Gastrocnemius medialis (tissue), 4 donors: ENCODE measurements at regions of chr11 and their contacts with region 1.

Region 1: DNA sequence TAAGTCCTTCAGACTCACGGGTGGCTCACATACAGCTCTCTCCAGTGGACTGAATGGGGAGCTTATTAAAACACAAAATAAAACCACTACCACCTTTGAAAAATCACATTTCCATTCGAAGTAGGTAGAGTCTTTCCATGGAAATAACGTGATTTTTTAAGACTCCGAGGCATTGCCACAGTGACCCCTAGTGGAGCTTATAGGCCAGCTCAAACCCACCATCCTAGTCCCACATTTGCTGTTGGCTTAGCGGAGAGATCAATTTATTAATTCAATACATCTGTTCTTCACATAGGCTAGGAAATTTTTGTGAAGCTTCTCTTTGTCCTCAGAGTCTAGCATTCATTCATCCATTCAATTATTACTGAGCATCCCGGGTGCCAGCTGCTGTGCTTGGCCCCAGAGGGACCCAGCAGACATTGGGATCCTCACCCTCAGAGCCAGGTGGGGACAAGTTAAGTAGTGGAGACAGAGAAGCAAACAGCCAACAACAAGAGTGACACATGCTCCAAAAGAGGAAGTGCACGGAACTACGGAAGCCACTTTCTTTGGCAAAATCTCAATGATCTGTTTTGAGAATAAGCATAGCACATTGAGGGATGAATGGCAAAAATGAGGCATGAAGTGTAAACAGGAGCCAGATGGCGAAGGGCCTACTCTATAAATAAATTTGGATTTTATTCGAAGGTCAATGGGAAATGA is 10.2 kb upstream of the P4HA3 start:
- DNase-seq: no peak
- ATAC-seq: no peak
- H3K4me3 ChIP-seq: no peak overlapping the region
- H3K27ac ChIP-seq: peak overlapping the region in 3 of 4 donors; percentile 68 to 79 (median 78)
- H3K4me1 ChIP-seq: peaks cover 31 to 49% of the 10 kb centered on the region in 2 donors
- H3K27me3 ChIP-seq: no peaks in the 10 kb centered on the region
- CTCF ChIP-seq: peak in 4 of 5 experiments; percentile 18 to 57 (median 44)
- POLR2A ChIP-seq: no peak

Region 2: DNA sequence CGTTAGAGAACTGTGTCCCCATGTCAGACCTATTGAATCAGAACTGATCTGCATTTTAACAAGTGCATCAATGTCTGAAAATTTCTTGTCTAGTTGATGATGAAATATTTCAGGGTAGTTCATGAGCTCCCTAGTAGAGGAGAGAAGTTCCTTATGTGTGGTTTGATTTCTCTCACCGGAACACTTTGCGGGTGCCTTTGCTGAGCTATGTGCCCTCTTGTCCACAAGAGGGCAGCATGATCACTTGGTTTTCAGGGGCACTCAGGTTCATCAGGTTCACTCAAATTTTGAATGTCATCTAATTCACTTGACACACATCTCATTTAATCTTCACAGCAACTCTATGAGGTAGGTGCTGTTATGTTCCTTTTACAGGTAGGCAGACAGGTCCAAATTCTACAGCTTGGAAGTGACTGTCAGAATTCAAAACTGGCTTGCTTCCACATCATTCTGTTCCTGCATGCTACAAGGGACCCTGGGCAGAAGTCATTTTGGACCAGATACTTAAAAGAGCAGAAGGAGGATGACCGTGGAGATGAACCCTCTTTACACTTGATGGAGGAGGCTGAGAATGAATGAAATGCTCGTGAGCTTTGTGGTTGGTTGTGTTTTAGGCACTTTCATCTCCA is 65.8 kb before region 1 on chr11:
- in situ Hi-C with region 1: no loop called
- intact Hi-C with region 1: loop called (anchors 2 kb)
- DNase-seq: peak in 1 of 2 donors; percentile 36
- ATAC-seq: peak; percentile 72 to 74
- H3K4me3 ChIP-seq: no peak overlapping the region
- H3K27ac ChIP-seq: no peak overlapping the region
- H3K4me1 ChIP-seq: peaks cover 17 to 29% of the 10 kb centered on the region in 2 donors
- H3K27me3 ChIP-seq: no peaks in the 10 kb centered on the region
- CTCF ChIP-seq: peak; percentile 71 to 90 (median 86)
- POLR2A ChIP-seq: no peak

Region 3: GRCh38 chr11:74311352-74311926 is 10.2 kb before region 1 on chr11 and contains the start of gene P4HA3:
- in situ Hi-C with region 1: no loop called
- intact Hi-C with region 1: loop called (anchors 1 kb)
- DNase-seq: peak; percentile 27 to 45
- ATAC-seq: peak; percentile 80 to 92
- H3K4me3 ChIP-seq: peak within 1 kb of the TSS; percentile 39 to 73 (median 54)
- H3K27ac ChIP-seq: no peak within 1 kb of the TSS
- H3K4me1 ChIP-seq: no peaks in the 10 kb centered on the region
- H3K27me3 ChIP-seq: no peaks in the 10 kb centered on the region
- CTCF ChIP-seq: peak in 1 of 5 experiments; percentile 27
- POLR2A ChIP-seq: no peak
- total RNA-seq, gene P4HA3: 0.09 TPM in 1 of 4 donors, not detected in the others

Region 4: GRCh38 chr11:74443071-74443864 is 121.6 kb after region 1 on chr11:
- in situ Hi-C with region 1: no loop called
- intact Hi-C with region 1: loop called (anchors 5 kb)
- DNase-seq: peak in 1 of 2 donors; percentile 51
- ATAC-seq: peak; percentile 23 to 58
- H3K4me3 ChIP-seq: peak overlapping the region in 1 of 4 donors; percentile 23
- H3K27ac ChIP-seq: peak overlapping the region; percentile 76 to 85 (median 82)
- H3K4me1 ChIP-seq: peaks cover 27 to 31% of the 10 kb centered on the region in 2 donors
- H3K27me3 ChIP-seq: no peaks in the 10 kb centered on the region
- CTCF ChIP-seq: peak in 3 of 5 experiments; percentile 10 to 30 (median 25)
- POLR2A ChIP-seq: no peak